ENCODE measurements at regions of chr5 and their contacts with region 1.

Region 1: GRCh38 chr5:45274241-45274640 is 421.9 kb downstream of the HCN1 start:
- DNase-seq: no peak
- ATAC-seq: no peak
- H3K4me3 ChIP-seq: no peak overlapping the region
- H3K27ac ChIP-seq: no peak overlapping the region
- H3K4me1 ChIP-seq: peaks cover 4% of the 10 kb centered on the region
- H3K27me3 ChIP-seq: no peaks in the 10 kb centered on the region
- CTCF ChIP-seq: no peak

Region 2: GRCh38 chr5:45334939-45335338 is 60.7 kb after region 1 on chr5:
- intact Hi-C with region 1: loop called in 1 of 2 experiments (anchors 10 kb)
- DNase-seq: no peak
- ATAC-seq: peak; percentile 79 to 97 (median 92)
- H3K4me3 ChIP-seq: peak overlapping the region; percentile 36
- H3K27ac ChIP-seq: peak overlapping the region; percentile 59
- H3K4me1 ChIP-seq: peaks cover 18% of the 10 kb centered on the region
- H3K27me3 ChIP-seq: no peaks in the 10 kb centered on the region
- CTCF ChIP-seq: no peak

Measured in psoas muscle (tissue), 8 donors.